ENCODE measurements at regions of chr18 and their contacts with region 1.

Region 1: GRCh38 chr18:73136134-73136533 is 268.3 kb upstream of the NETO1 start:
- DNase-seq: peak; percentile 3
- ATAC-seq: peak; percentile 41; the same call in 1 of the 3 replicates
- H3K4me3 ChIP-seq: no peak overlapping the region
- H3K27ac ChIP-seq: no peak overlapping the region
- H3K4me1 ChIP-seq: no peaks in the 10 kb centered on the region
- H3K27me3 ChIP-seq: no peaks in the 10 kb centered on the region
- CTCF ChIP-seq: peak; percentile 23; the same call in 1 of the 2 replicates
- EP300 ChIP-seq: no peak
- POLR2A ChIP-seq: no peak
- RAD21 ChIP-seq: no peak

Region 2: DNA sequence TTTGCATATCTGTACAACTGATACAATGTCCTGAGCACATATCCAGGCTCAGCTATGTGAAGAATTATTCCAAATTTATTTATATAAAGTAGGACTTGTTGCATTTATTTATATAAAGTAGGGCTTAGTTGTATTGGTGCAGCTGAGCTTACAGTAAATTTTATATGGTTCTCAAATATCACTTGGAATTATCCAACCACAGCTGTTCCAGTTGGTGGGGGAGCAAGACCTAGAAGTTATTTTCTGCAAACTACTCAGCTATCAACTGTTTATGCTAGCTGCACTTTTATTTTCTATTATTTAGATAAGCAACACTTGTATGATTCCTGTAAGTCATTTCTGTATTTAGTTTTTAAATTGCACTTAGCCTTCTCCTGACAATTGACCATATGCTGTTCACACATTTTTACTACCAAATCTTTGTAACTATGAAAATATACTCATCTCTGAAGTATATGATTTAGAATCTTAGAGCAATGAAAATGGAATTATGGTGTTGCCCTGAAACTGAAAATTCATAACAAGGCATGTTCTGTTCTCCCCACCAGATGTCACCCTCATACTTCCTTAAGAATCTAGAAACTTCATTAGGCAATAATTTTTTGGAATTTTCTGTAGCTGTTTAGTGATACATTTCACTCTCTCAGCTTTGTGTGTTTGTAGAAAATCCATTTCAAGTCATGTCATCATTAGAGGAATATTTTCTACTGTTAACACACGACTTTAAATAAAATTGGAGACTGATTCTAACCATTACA is 435.0 kb before region 1 on chr18:
- CTCF ChIA-PET with region 1: no interaction called
- POLR2A ChIA-PET with region 1: no interaction called
- in situ Hi-C with region 1: no loop called
- intact Hi-C with region 1: loop called (anchors 5 kb)
- DNase-seq: peak; percentile 9
- ATAC-seq: no peak
- H3K4me3 ChIP-seq: no peak overlapping the region
- H3K27ac ChIP-seq: no peak overlapping the region
- H3K4me1 ChIP-seq: no peaks in the 10 kb centered on the region
- H3K27me3 ChIP-seq: peaks cover 0 to 3% of the 10 kb centered on the region in 2 experiments; a peak in 2 of 5 replicates
- CTCF ChIP-seq: peak; percentile 31
- EP300 ChIP-seq: no peak
- POLR2A ChIP-seq: no peak
- RAD21 ChIP-seq: no peak

Region 3: DNA sequence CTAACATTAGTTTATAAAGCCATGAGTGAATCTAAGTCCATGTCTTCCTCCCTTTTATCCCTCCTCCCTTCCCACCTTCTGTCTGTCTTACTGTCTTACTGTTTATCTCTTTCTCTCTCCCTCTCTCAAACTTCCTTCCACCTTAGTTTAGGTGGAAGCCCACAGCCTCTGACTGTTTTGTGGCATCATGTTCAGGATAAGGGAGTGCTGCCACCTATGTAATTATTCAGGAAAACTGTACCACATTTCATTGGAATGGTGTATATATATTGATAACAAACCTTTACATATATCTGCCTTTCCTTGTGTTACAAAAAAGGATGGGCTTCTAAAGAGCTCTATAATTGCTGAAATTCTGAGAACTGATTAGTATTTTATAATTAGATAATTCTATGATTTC is 317.1 kb before region 1 on chr18:
- CTCF ChIA-PET with region 1: no interaction called
- POLR2A ChIA-PET with region 1: no interaction called
- in situ Hi-C with region 1: no loop called
- intact Hi-C with region 1: loop called (anchors 5 kb)
- DNase-seq: no peak
- ATAC-seq: no peak
- H3K4me3 ChIP-seq: no peak overlapping the region
- H3K27ac ChIP-seq: no peak overlapping the region
- H3K4me1 ChIP-seq: no peaks in the 10 kb centered on the region
- H3K27me3 ChIP-seq: no peaks in the 10 kb centered on the region; a peak in 1 of 5 replicates
- CTCF ChIP-seq: no peak
- EP300 ChIP-seq: no peak
- POLR2A ChIP-seq: no peak
- RAD21 ChIP-seq: no peak

Region 4: DNA sequence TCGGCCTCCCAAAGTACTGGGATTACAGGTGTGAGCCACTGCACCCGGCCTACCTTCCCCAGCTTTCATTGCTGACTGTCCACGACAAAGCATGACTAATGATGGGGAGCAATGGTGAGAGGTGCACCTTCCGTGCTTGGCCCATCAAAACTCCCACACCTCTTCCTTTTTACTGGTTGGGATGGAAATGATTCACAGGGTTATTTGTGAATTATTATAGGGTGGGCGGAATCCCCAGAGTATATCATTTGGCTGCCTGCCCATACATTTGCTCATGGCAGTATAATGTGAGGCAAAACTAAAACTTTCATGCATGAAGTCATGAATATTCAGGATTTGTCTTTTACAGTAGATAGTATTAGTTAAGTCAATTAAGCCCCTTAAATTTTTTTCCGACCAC is 65.8 kb after region 1 on chr18:
- CTCF ChIA-PET with region 1: no interaction called
- POLR2A ChIA-PET with region 1: no interaction called
- in situ Hi-C with region 1: no loop called
- intact Hi-C with region 1: no loop called
- DNase-seq: no peak
- ATAC-seq: no peak
- H3K4me3 ChIP-seq: no peak overlapping the region
- H3K27ac ChIP-seq: no peak overlapping the region
- H3K4me1 ChIP-seq: no peaks in the 10 kb centered on the region
- H3K27me3 ChIP-seq: no peaks in the 10 kb centered on the region; a peak in 1 of 5 replicates
- CTCF ChIP-seq: no peak
- EP300 ChIP-seq: no peak
- POLR2A ChIP-seq: no peak
- RAD21 ChIP-seq: no peak

Measured in HepG2 (cell line).